SK-N-SH (cell line): ENCODE measurements at regions of chr18 and their contacts with region 1.

Region 1: GRCh38 chr18:24726727-24727492 is 266.5 kb downstream of the HRH4 start:
- DNase-seq: peak; percentile 61
- H3K4me3 ChIP-seq: peak overlapping the region in 1 of 2 experiments; percentile 43; a peak in 1 of 4 replicates
- H3K27ac ChIP-seq: no peak overlapping the region
- H3K4me1 ChIP-seq: peaks cover 0 to 3% of the 10 kb centered on the region in 2 experiments; a peak in 2 of 4 replicates
- H3K27me3 ChIP-seq: peaks cover 3% of the 10 kb centered on the region; the same call in 1 of the 2 replicates
- CTCF ChIP-seq: peak; percentile 89
- EP300 ChIP-seq: no peak
- RAD21 ChIP-seq: peak; percentile 93

Region 2: DNA sequence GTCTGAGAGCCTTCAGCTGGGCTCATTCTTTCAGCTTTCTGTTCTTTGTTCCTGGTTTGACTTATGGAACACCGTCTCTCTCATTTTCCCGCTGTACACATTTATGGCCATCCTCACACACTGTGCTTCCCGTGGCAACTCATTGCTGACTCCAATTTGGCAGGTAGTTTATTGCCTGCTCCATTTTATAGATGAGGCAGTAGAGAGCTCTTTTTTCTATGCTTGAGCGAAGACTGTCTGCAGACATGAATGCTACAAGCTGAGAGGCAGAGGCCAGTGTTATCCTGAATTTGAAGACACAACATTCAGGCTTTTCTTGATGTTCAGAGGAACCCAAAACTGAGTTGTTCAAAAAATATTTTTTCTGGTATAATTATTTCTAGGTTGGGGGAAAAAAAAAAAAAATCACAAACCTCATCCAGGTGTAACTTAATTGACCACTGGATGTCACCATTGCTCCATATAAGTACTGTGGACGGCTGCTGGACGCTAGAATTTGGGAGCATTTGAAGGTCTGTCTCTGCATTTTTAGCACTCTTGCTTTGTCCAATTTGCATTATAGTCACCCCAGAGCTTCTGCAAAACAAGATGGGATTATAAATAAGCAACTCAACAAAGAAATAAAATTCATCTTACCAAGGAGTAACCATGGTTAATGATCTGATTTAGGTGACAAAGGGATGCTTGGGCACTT is 183.0 kb before region 1 on chr18:
- CTCF ChIA-PET with region 1: interaction called, 125 read pairs
- POLR2A ChIA-PET with region 1: no interaction called
- DNase-seq: peak; percentile 39
- H3K4me3 ChIP-seq: no peak overlapping the region; a peak in 1 of 4 replicates
- H3K27ac ChIP-seq: no peak overlapping the region
- H3K4me1 ChIP-seq: peaks cover 0 to 5% of the 10 kb centered on the region in 2 experiments; a peak in 2 of 4 replicates
- H3K27me3 ChIP-seq: no peaks in the 10 kb centered on the region; the same call in 1 of the 2 replicates
- CTCF ChIP-seq: peak; percentile 52
- EP300 ChIP-seq: no peak
- RAD21 ChIP-seq: peak; percentile 82

Region 3: DNA sequence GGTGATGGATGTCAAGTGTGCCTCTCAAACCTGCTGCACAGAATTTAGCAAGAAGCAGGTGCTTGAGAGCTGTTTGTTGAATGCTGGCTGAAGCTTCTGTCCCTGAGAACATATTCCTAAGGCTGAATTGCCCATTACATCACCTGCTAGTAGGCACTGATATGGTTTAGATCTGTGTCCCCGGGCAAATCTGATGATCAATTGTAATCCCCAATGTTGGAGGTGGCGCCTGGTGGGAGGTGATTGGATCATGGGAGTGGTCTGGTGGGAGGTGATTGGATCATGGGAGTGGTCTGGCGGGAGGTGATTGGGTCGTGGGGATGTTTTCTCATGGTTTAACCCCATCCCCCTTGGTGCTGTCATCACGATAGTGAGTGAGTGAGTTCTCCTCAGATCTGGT is 138.5 kb before region 1 on chr18:
- CTCF ChIA-PET with region 1: interaction called, 151 read pairs
- POLR2A ChIA-PET with region 1: no interaction called
- DNase-seq: no peak
- H3K4me3 ChIP-seq: no peak overlapping the region
- H3K27ac ChIP-seq: no peak overlapping the region
- H3K4me1 ChIP-seq: peaks cover 0 to 5% of the 10 kb centered on the region in 2 experiments; a peak in 1 of 4 replicates
- H3K27me3 ChIP-seq: no peaks in the 10 kb centered on the region
- CTCF ChIP-seq: no peak
- EP300 ChIP-seq: no peak
- RAD21 ChIP-seq: no peak

Region 4: GRCh38 chr18:24605450-24605849 is 121.5 kb before region 1 on chr18:
- CTCF ChIA-PET with region 1: interaction called, 151 read pairs
- POLR2A ChIA-PET with region 1: no interaction called
- DNase-seq: no peak
- H3K4me3 ChIP-seq: no peak overlapping the region
- H3K27ac ChIP-seq: no peak overlapping the region
- H3K4me1 ChIP-seq: no peaks in the 10 kb centered on the region
- H3K27me3 ChIP-seq: no peaks in the 10 kb centered on the region
- CTCF ChIP-seq: no peak
- EP300 ChIP-seq: no peak
- RAD21 ChIP-seq: no peak

Region 5: GRCh38 chr18:24672165-24672941 is 54.6 kb before region 1 on chr18:
- CTCF ChIA-PET with region 1: interaction called, 17 read pairs
- POLR2A ChIA-PET with region 1: interaction called, 4 read pairs
- DNase-seq: peak; percentile 63
- H3K4me3 ChIP-seq: no peak overlapping the region
- H3K27ac ChIP-seq: peak overlapping the region in 1 of 2 experiments; percentile 75; a peak in 2 of 4 replicates
- H3K4me1 ChIP-seq: peaks cover 0 to 26% of the 10 kb centered on the region in 2 experiments; a peak in 2 of 4 replicates
- H3K27me3 ChIP-seq: no peaks in the 10 kb centered on the region
- CTCF ChIP-seq: no peak
- EP300 ChIP-seq: peak in 1 of 2 experiments; percentile 82; a peak in 2 of 4 replicates
- RAD21 ChIP-seq: peak; percentile 77

Region 6: GRCh38 chr18:24754572-24754971 is 27.7 kb after region 1 on chr18:
- CTCF ChIA-PET with region 1: interaction called, 12 read pairs
- POLR2A ChIA-PET with region 1: no interaction called
- DNase-seq: no peak
- H3K4me3 ChIP-seq: no peak overlapping the region
- H3K27ac ChIP-seq: no peak overlapping the region
- H3K4me1 ChIP-seq: no peaks in the 10 kb centered on the region; a peak in 2 of 4 replicates
- H3K27me3 ChIP-seq: no peaks in the 10 kb centered on the region
- CTCF ChIP-seq: no peak
- EP300 ChIP-seq: no peak
- RAD21 ChIP-seq: no peak

Region 7: GRCh38 chr18:24964216-24964615 is 237.3 kb after region 1 on chr18:
- CTCF ChIA-PET with region 1: no interaction called
- POLR2A ChIA-PET with region 1: no interaction called
- DNase-seq: no peak
- H3K4me3 ChIP-seq: no peak overlapping the region
- H3K27ac ChIP-seq: no peak overlapping the region
- H3K4me1 ChIP-seq: peaks cover 0 to 1% of the 10 kb centered on the region in 2 experiments; a peak in 1 of 4 replicates
- H3K27me3 ChIP-seq: no peaks in the 10 kb centered on the region
- CTCF ChIP-seq: no peak
- EP300 ChIP-seq: no peak
- RAD21 ChIP-seq: no peak